ENCODE measurements at regions of chr14 and their contacts with region 1.

Region 1: DNA sequence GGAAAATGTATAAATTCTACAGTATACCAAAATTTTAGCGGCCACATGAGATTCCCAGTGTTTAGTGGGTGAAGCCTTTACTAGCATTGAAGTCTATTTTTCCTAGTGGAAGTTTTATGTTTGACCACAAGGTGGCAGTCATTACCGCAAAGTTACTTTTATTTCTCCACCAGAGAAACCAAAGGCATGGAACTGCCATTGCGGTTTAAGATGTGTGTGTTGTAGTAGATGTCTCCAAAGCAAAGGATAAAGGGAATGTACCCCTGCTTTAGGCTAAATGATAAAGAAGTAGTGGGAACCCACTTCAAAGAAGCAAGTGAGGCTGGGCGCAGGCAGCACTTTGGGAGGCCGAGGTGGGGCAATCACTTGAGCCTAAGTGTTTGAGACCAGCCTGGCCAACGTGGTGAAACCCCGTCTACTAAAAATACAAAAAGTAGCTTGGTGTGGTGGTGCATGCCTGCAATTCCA is 140.5 kb downstream of the PRKCH start:
- DNase-seq: no peak
- ATAC-seq: peak; percentile 62 to 69
- H3K4me3 ChIP-seq: no peak overlapping the region
- H3K27ac ChIP-seq: no peak overlapping the region
- H3K4me1 ChIP-seq: peaks cover 16% of the 10 kb centered on the region
- H3K27me3 ChIP-seq: no peaks in the 10 kb centered on the region
- CTCF ChIP-seq: peak; percentile 79

Region 2: DNA sequence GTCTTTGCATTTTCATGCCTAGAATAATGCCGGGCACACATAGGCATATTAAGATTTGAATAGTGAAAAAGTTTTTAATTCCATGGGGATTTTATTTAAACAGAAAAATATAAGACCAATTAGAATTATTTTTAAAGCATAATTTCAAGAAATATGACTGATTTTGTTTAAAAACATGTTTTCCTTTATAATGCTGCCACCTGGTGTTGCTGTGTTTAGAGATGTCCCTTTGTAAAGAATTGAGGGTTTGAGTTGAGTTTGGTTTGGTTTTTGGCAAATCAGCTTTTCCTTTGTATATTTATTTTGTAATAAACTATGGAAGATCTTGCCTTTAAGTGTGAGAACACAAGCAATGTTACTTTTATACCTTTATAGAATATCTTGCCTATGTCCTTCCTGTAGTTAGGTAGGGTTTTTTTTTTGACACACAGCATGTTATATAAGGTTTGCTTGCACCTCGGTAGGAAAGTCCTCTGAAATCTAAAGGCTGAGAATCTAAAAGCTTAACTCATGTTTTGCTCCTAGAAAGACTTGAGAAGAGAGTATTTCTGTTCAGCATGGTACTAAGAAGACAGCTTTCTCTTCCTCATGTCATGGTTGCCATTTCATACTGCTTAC is 269.0 kb after region 1 on chr14:
- intact Hi-C with region 1: loop called (anchors 10 kb)
- DNase-seq: no peak
- ATAC-seq: no peak
- H3K4me3 ChIP-seq: no peak overlapping the region
- H3K27ac ChIP-seq: no peak overlapping the region
- H3K4me1 ChIP-seq: peaks cover 4% of the 10 kb centered on the region
- H3K27me3 ChIP-seq: no peaks in the 10 kb centered on the region
- CTCF ChIP-seq: peak; percentile 52

Region 3: DNA sequence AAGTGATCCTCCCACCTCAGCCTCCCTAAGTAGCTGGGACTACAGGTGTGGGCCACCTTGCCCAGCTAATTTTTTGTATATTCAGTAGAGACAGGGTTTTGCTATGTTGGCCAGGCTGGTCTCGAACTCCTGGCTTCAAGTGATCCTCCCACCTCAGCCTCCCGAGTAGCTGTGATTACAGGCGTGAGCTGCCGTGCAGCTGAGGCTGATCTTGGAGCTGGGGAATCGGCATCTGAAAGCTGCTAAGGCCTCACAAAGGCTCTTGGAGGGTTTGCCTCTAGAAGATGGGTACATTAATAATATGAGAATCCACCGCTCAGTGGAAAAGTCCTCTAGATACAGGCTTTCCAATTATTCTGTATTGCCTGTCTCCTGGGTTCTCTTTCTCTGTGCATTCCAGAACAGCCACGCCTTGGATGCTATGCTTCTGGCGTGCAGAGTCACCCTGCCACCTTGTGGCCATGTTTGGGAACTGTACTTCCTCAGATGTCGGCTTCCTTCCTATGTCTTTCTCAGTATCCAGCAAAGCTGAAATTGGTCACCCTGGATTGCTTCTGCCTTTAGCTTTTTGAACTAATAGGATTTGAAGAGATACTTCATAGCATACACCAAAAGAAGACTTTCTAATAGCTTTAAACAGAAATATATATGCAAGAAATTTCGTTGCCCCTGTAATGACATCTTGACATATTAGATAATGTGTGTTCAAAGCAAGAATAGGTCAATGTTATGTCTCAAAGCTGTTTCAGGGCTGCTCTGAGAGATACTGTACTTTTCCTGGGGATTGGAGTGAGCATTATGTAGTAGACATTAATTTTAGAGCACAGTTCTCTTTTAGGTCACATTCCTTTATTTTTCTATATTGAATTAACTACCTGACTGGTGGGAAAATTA is 375.7 kb after region 1 on chr14:
- intact Hi-C with region 1: loop called (anchors 10 kb)
- DNase-seq: peak; percentile 76
- ATAC-seq: peak; percentile 95 to 96
- H3K4me3 ChIP-seq: no peak overlapping the region
- H3K27ac ChIP-seq: no peak overlapping the region
- H3K4me1 ChIP-seq: no peaks in the 10 kb centered on the region
- H3K27me3 ChIP-seq: no peaks in the 10 kb centered on the region
- CTCF ChIP-seq: peak; percentile 94

Measured in lower lobe of right lung (tissue), 2 donors.